Heart right ventricle (tissue), 16 donors: ENCODE measurements at regions of chr14 and their contacts with region 1.

Region 1: DNA sequence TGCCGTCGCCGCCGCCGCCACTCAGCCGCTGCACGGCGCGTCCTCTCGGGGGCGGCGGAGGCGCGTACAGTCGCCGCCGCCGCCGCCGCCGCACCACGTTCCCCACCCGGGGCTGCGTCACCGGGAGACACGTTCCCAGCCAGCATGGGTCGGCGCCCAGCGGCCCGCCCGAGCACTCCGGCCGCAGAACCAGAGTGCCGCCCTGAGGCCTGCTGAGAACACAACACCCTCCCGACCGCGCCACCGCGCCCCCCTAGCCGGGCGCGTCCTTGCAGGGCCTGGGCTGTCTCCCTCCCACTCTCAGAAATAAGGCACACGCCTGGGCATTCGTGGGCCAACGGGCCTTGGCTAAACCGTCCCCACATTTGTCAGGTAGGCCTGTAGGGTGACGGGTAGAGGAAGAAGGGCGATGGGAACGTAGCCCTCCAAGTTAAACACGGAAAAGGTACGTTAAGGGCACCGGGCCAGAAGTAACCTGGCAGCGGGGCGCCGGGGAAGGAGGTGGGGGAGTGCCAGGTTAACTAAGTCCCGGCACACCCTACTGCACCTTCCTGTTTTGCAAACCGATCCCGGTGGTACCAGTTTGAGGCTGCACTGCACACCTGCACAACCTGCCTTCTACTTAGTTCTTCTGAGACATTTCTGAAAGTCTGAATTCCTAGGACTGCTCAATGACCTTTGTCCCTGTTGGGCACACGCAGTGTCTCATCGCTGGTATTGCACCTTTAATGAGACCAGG is at the start of gene MAP4K5:
- DNase-seq: peak; percentile 90 to 93
- ATAC-seq: peak; percentile 98 to 100 (median 100)
- H3K4me3 ChIP-seq: peak within 1 kb of the TSS; percentile 84 to 97 (median 91)
- H3K27ac ChIP-seq: peak within 1 kb of the TSS; percentile 68 to 97 (median 94)
- H3K4me1 ChIP-seq: peaks cover 0 to 42% (median 28%) of the 10 kb centered on the region in 9 donors
- H3K27me3 ChIP-seq: no peaks in the 10 kb centered on the region
- CTCF ChIP-seq: peak; percentile 83 to 96 (median 92)
- total RNA-seq, gene MAP4K5: 7.1 to 19.8 (median 12.1) TPM

Region 2: DNA sequence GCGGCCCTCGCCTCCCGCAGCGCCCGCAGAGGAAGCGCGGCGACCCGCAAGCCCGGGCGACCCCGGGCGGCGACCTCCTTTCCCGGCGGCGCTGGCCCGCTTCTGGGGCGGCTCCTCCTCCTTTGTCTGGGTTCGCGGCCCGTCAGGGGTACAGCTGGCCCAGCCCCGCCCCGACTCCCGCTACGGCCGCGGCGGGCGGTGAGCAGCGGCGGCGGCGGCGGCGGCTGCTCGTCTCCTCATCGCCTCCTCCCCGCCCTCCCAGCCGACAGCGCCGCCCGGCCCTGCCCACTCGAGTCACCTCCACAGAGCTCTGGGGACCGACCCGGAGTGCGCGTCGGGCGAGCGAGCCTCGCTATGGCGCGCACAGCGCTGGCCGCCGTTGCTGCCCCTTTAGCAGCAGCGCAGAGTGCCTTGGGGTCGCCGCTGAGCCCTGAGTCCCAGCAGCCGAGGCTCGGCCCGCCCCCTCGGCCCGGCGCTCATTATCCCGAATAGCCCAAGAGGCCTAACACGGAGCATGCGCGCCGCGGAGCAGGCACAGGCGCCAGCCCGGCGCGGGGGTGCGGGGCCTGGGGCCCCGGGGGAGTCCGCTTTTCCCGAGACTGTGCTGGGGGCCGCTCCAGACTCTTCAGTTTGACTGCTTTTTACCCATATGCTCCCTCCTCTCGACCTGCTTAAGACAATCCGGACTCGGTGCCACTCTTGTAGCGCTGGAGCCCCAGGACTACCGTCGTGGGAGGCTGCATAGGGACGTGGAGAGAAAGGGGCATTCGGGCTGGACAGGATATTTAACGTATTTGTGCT is 301.0 kb before region 1 on chr14 and contains the start of gene SOS2:
- intact Hi-C with region 1: loop called in 1 of 10 experiments (anchors 5 kb)
- DNase-seq: peak; percentile 86 to 88
- ATAC-seq: peak; percentile 94 to 97 (median 95)
- H3K4me3 ChIP-seq: peak within 1 kb of the TSS; percentile 66 to 89 (median 83)
- H3K27ac ChIP-seq: peak within 1 kb of the TSS; percentile 93 to 99 (median 97)
- H3K4me1 ChIP-seq: peaks cover 5 to 53% (median 40%) of the 10 kb centered on the region in 9 donors
- H3K27me3 ChIP-seq: no peaks in the 10 kb centered on the region
- CTCF ChIP-seq: peak in 4 of 9 donors; percentile 5 to 33 (median 28)
- total RNA-seq, gene SOS2: 27.4 to 40.0 (median 34.4) TPM

Region 3: GRCh38 chr14:50321009-50321660 is 211.5 kb before region 1 on chr14:
- intact Hi-C with region 1: loop called (anchors 1 to 5 kb)
- DNase-seq: peak in 1 of 2 donors; percentile 74
- ATAC-seq: peak; percentile 90 to 97 (median 94)
- H3K4me3 ChIP-seq: peak overlapping the region in 6 of 10 donors; percentile 10 to 43 (median 32)
- H3K27ac ChIP-seq: peak overlapping the region in 9 of 10 donors; percentile 6 to 78 (median 61)
- H3K4me1 ChIP-seq: peaks cover 0 to 32% (median 15%) of the 10 kb centered on the region in 9 donors
- H3K27me3 ChIP-seq: no peaks in the 10 kb centered on the region
- CTCF ChIP-seq: peak; percentile 73 to 96 (median 88)

Region 4: GRCh38 chr14:50342221-50343078 is 190.2 kb before region 1 on chr14:
- intact Hi-C with region 1: loop called in 1 of 10 experiments (anchors 5 kb)
- DNase-seq: peak; percentile 33 to 60
- ATAC-seq: peak; percentile 87 to 93 (median 91)
- H3K4me3 ChIP-seq: peak overlapping the region in 8 of 10 donors; percentile 4 to 35 (median 24)
- H3K27ac ChIP-seq: peak overlapping the region in 9 of 10 donors; percentile 25 to 66 (median 47)
- H3K4me1 ChIP-seq: peaks cover 4 to 43% (median 32%) of the 10 kb centered on the region in 9 donors
- H3K27me3 ChIP-seq: no peaks in the 10 kb centered on the region
- CTCF ChIP-seq: peak in 8 of 9 donors; percentile 8 to 71 (median 43)